ENCODE measurements at regions of chr11 and their contacts with region 1.

Region 1: DNA sequence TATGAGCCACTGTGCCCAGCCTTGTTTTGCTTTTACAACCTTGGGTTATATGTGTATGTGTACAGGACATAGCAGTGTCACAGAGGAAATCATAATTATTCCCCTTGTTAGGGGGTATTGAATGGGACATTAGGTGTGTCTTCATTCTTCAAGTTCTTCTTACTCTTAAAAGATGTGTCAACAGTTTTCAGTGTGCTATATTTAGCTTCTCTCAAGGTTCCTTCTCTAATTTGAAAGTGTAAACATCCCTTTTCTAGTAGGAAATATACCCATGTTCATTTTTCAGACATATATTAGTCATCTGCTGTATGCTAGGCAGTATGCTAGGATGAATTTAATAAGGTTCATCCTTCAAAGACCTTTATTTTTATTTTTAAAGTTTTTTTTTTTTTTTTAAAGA is 17.1 kb downstream of the PCF11 start:
- DNase-seq: no peak
- ATAC-seq: peak in 1 of 8 donors; percentile 39
- H3K4me3 ChIP-seq: no peak overlapping the region
- H3K27ac ChIP-seq: peak overlapping the region in 1 of 10 donors; percentile 12
- H3K4me1 ChIP-seq: peaks cover 0 to 74% (median 65%) of the 10 kb centered on the region in 9 donors
- H3K27me3 ChIP-seq: no peaks in the 10 kb centered on the region
- CTCF ChIP-seq: no peak

Region 2: GRCh38 chr11:83162377-83162776 is 11.6 kb before region 1 on chr11:
- intact Hi-C with region 1: loop called in 1 of 10 experiments (anchors 2 kb)
- DNase-seq: no peak
- ATAC-seq: no peak
- H3K4me3 ChIP-seq: peak overlapping the region in 1 of 10 donors; percentile 86
- H3K27ac ChIP-seq: peak overlapping the region in 3 of 10 donors; percentile 4 to 28 (median 22)
- H3K4me1 ChIP-seq: peaks cover 0 to 63% (median 44%) of the 10 kb centered on the region in 9 donors
- H3K27me3 ChIP-seq: no peaks in the 10 kb centered on the region
- CTCF ChIP-seq: no peak

Measured in heart right ventricle (tissue), 16 donors.